Activated naive CD4-positive, alpha-beta T cell treated with anti-CD3 and anti-CD28 coated beads for 36 hours (primary cell): ENCODE measurements at regions of chr13 and their contacts with region 1.

Region 1: GRCh38 chr13:51814825-51815650 is 11.1 kb upstream of the DHRS12 start:
- DNase-seq: peak; percentile 89
- H3K4me3 Mint-ChIP-seq: peak overlapping the region; percentile 62
- H3K27ac Mint-ChIP-seq: peak overlapping the region; percentile 87
- H3K4me1 Mint-ChIP-seq: peaks cover 86% of the 10 kb centered on the region
- H3K27me3 Mint-ChIP-seq: no peaks in the 10 kb centered on the region

Region 2: GRCh38 chr13:51832471-51833152 is 17.6 kb after region 1 on chr13:
- CTCF ChIA-PET with region 1: interaction called, 176 read pairs
- intact Hi-C with region 1: loop called (anchors 1 kb)
- DNase-seq: peak; percentile 79
- H3K4me3 Mint-ChIP-seq: no peak overlapping the region
- H3K27ac Mint-ChIP-seq: peak overlapping the region; percentile 57
- H3K4me1 Mint-ChIP-seq: peaks cover 44% of the 10 kb centered on the region
- H3K27me3 Mint-ChIP-seq: no peaks in the 10 kb centered on the region

Region 3: DNA sequence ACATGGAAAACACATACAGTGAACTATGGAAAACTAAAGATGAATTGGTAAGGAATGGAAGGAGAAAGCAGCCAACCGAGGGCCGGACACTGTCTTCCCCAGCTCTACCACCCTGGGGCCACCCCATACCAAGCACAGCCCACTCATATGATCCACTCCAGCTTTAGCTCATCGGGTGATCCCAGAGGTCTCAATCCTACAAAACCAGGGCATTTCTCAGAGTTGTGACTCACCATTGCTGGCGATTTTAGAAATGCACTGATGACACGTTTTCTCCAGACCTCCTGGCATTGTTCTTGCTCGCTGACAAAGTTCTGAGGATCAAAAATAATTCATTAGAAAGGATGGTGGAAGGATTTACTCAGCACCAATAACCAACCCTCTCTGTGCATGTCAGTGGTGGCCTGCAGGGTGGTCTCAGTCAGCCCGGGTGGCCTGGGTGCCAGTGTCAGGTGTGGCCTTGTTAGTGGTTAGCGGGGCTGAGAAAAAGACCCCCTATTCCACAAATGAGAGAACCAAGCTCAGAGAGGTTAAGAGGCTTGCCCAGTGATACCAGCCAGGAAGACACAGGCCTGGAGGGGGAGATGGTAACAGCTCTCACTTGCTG is 23.3 kb after region 1 on chr13:
- CTCF ChIA-PET with region 1: interaction called, 176 read pairs
- intact Hi-C with region 1: no loop called
- DNase-seq: peak; percentile 44
- H3K4me3 Mint-ChIP-seq: no peak overlapping the region
- H3K27ac Mint-ChIP-seq: no peak overlapping the region
- H3K4me1 Mint-ChIP-seq: peaks cover 17% of the 10 kb centered on the region
- H3K27me3 Mint-ChIP-seq: no peaks in the 10 kb centered on the region

Region 4: GRCh38 chr13:51844862-51845573 is 30.0 kb after region 1 on chr13 and contains the start of gene TMEM272:
- CTCF ChIA-PET with region 1: interaction called, 42 read pairs
- intact Hi-C with region 1: loop called (anchors 1 kb)
- DNase-seq: peak; percentile 63
- H3K4me3 Mint-ChIP-seq: peak within 1 kb of the TSS; percentile 47
- H3K27ac Mint-ChIP-seq: no peak within 1 kb of the TSS
- H3K4me1 Mint-ChIP-seq: peaks cover 17% of the 10 kb centered on the region
- H3K27me3 Mint-ChIP-seq: peaks cover 6% of the 10 kb centered on the region
- total RNA-seq, gene TMEM272: 0.41 to 0.42 TPM

Region 5: DNA sequence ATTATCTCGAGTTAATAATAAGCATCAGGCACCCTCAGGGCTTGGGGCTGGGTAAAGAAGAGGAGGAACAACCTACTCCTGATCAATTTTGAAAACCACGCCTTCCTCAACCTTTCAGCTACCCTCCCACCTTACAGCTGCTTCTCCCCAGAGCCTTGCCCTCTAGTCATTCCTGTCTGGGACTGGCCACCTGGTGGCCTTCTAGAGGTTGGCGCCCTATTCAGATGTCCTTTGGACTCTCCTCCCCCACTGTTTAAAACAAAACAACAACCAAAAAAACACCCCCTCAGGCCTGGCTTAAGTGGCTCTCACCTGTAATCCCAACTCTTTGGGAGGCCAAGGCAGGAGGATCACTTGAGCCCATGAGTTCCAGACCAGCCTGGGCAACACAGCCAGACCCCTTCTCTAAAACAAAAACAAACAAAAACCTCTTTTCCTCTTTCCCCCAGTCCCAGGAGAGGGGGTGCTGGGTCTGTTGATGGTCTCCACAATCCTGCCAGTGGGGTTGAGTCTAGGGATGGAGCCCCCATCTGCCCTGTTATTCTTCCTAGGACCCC is 109.0 kb after region 1 on chr13:
- CTCF ChIA-PET with region 1: no interaction called
- intact Hi-C with region 1: no loop called
- DNase-seq: no peak
- H3K4me3 Mint-ChIP-seq: no peak overlapping the region
- H3K27ac Mint-ChIP-seq: no peak overlapping the region
- H3K4me1 Mint-ChIP-seq: peaks cover 15% of the 10 kb centered on the region
- H3K27me3 Mint-ChIP-seq: no peaks in the 10 kb centered on the region